Activated CD4-positive, alpha-beta T cell treated with anti-CD3 and anti-CD28 coated beads for 36 hours (primary cell): ENCODE measurements at regions of chr16 and their contacts with region 1.

Region 1: DNA sequence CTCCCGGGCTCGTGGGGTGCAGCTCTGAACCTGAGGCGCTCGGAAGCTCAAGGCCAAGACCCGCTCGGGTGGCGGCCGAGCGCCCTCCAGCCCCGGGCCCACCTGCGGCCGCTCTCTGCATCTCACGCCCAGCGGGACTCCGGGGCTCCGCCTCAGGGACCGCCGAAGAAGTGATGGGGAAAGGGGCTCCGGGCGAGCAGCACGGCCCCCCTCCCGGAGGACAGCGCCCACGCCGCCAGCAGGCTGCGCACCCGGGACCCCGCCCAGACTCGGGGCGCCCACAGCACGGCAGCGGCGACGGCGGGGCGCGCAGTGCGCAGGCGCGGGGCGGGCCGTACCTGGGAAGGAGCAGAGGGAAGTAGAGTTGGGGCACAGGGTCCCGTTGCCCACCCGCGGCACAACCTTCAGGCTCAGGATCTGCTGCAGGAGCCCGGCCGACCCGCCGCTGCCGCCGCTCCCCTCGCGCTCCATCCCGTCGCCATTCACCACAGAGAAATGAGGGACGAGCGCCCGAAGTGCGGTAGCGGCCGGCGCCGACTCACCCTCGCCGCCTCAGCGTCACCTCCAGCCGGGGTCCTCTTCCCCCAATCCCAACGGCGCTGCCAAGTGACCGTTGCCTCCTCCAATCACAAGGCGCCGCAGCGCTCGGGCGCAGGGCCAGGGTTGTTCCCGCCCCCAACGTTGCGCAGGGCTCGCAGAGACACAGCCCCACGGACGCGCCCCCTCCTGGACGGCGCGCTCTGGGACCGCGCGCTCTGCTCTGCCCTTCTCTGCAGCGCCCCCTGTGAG is at the start of gene TMEM170A:
- DNase-seq: peak; percentile 100
- ATAC-seq: peak; percentile 94
- H3K4me3 Mint-ChIP-seq: peak within 1 kb of the TSS; percentile 98
- H3K27ac Mint-ChIP-seq: peak within 1 kb of the TSS; percentile 94
- H3K4me1 Mint-ChIP-seq: peaks cover 45% of the 10 kb centered on the region
- H3K27me3 Mint-ChIP-seq: no peaks in the 10 kb centered on the region
- total RNA-seq, gene TMEM170A: 22.0 to 30.5 TPM

Region 2: GRCh38 chr16:75402821-75403475 is 61.4 kb before region 1 on chr16:
- CTCF ChIA-PET with region 1: interaction called, 3 read pairs
- POLR2A ChIA-PET with region 1: no interaction called
- intact Hi-C with region 1: loop called in 1 of 2 experiments (anchors 1 kb)
- DNase-seq: no peak
- ATAC-seq: peak; percentile 76
- H3K4me3 Mint-ChIP-seq: no peak overlapping the region
- H3K27ac Mint-ChIP-seq: peak overlapping the region; percentile 19
- H3K4me1 Mint-ChIP-seq: peaks cover 17% of the 10 kb centered on the region
- H3K27me3 Mint-ChIP-seq: no peaks in the 10 kb centered on the region

Region 3: GRCh38 chr16:75432828-75433731 is 31.2 kb before region 1 on chr16 and contains the start of gene CFDP1:
- CTCF ChIA-PET with region 1: interaction called, 8 read pairs
- POLR2A ChIA-PET with region 1: interaction called, 3 read pairs
- intact Hi-C with region 1: loop called (anchors 1 kb)
- DNase-seq: peak; percentile 97
- ATAC-seq: peak; percentile 94
- H3K4me3 Mint-ChIP-seq: peak within 1 kb of the TSS; percentile 92
- H3K27ac Mint-ChIP-seq: peak within 1 kb of the TSS; percentile 95
- H3K4me1 Mint-ChIP-seq: peaks cover 39% of the 10 kb centered on the region
- H3K27me3 Mint-ChIP-seq: no peaks in the 10 kb centered on the region
- total RNA-seq, gene CFDP1: 44.0 to 48.2 TPM

Region 4: GRCh38 chr16:75965504-75966374 is 501.4 kb after region 1 on chr16:
- CTCF ChIA-PET with region 1: no interaction called
- POLR2A ChIA-PET with region 1: no interaction called
- intact Hi-C with region 1: no loop called
- DNase-seq: no peak
- ATAC-seq: no peak
- H3K4me3 Mint-ChIP-seq: no peak overlapping the region
- H3K27ac Mint-ChIP-seq: no peak overlapping the region
- H3K4me1 Mint-ChIP-seq: no peaks in the 10 kb centered on the region
- H3K27me3 Mint-ChIP-seq: no peaks in the 10 kb centered on the region